PC-9 (cell line): ENCODE measurements at regions of chr3 and their contacts with region 1.

Region 1: DNA sequence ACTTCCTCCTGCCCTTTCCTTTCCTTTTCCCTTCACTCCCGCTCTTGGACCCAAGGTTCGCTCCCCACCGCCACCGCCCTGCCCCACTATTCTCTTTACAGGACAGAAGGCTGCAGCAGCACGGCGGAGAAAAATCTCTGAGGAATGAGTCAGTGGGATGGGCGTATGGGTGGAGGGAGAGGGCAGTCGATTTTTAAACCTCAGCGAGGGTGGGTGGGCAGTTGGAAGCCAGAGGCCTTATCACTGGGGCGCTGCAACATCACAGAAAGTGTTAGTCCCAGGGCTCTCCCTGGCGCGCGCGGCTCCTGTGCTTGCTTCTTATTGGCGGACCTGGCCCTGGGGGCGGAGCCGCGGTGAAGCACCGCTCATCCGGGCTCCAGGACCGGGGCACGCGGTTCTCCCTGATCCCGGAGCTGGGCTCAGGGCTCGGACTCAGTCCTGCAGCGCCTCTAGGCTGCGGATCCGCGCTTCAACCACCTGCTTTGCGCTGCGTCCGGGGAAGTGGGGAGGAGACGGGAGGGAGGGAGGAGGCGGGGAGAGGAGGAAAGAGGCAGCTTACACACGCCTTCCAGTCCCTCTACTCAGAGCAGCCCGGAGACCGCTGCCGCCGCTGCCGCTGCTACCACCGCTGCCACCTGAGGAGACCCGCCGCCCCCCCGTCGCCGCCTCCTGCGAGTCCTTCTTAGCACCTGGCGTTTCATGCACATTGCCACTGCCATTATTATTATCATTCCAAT is at the start of gene ALCAM:
- DNase-seq: peak; percentile 93 to 99
- H3K4me3 ChIP-seq: peak within 1 kb of the TSS; percentile 78
- H3K27ac ChIP-seq: peak within 1 kb of the TSS; percentile 86
- H3K4me1 ChIP-seq: peaks cover 29% of the 10 kb centered on the region
- H3K27me3 ChIP-seq: no peaks in the 10 kb centered on the region
- CTCF ChIP-seq: peak; percentile 70
- total RNA-seq, gene ALCAM: 110 and 132 TPM in 2 replicates

Region 2: DNA sequence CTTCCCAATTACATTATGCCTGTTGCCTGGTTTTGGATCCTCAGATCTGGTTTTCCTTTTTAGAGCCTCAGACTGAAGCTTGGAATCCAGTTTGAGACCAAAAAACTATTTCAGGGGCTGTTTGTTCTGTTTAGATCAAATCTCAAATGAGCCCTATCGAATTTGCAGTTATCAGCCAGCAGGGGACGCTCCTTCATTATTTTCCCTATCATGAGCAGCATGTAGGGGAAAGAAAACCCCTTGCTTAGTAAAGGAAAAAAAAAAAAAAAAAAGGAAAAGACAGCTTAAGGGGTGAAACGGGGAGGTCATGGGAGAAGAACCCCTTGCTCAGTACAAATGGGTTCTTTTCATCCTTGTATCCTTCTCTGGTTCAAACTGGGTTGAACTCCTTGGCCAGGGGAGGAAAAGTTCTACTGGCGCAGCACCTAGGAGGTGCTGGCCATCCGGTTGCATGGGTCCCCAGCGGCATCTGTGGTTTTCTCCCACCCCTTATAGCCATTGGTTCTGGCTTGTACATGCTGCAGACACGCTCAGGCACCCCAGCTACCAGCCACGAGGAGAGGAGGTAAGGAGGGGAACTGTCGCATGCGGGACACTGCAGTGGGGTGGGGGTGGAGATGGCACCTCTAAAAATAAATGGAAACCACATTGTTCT is 1374.9 kb before region 1 on chr3:
- CTCF ChIA-PET with region 1: no interaction called
- POLR2A ChIA-PET with region 1: no interaction called
- intact Hi-C with region 1: loop called (anchors 10 kb)
- DNase-seq: no peak
- H3K4me3 ChIP-seq: no peak overlapping the region
- H3K27ac ChIP-seq: no peak overlapping the region
- H3K4me1 ChIP-seq: no peaks in the 10 kb centered on the region
- H3K27me3 ChIP-seq: no peaks in the 10 kb centered on the region
- CTCF ChIP-seq: peak; percentile 75

Region 3: GRCh38 chr3:104564045-104564643 is 802.4 kb before region 1 on chr3:
- CTCF ChIA-PET with region 1: no interaction called
- POLR2A ChIA-PET with region 1: no interaction called
- intact Hi-C with region 1: loop called (anchors 1 kb)
- DNase-seq: peak; percentile 41 to 66
- H3K4me3 ChIP-seq: no peak overlapping the region
- H3K27ac ChIP-seq: no peak overlapping the region
- H3K4me1 ChIP-seq: no peaks in the 10 kb centered on the region
- H3K27me3 ChIP-seq: no peaks in the 10 kb centered on the region
- CTCF ChIP-seq: peak; percentile 96

Region 4: GRCh38 chr3:104763007-104763406 is 603.5 kb before region 1 on chr3:
- CTCF ChIA-PET with region 1: no interaction called
- POLR2A ChIA-PET with region 1: no interaction called
- intact Hi-C with region 1: loop called (anchors 10 kb)
- DNase-seq: peak in 1 of 2 experiments; percentile 10
- H3K4me3 ChIP-seq: no peak overlapping the region
- H3K27ac ChIP-seq: no peak overlapping the region
- H3K4me1 ChIP-seq: no peaks in the 10 kb centered on the region
- H3K27me3 ChIP-seq: no peaks in the 10 kb centered on the region
- CTCF ChIP-seq: no peak

Region 5: GRCh38 chr3:105158286-105158685 is 208.2 kb before region 1 on chr3:
- CTCF ChIA-PET with region 1: no interaction called
- POLR2A ChIA-PET with region 1: no interaction called
- intact Hi-C with region 1: loop called (anchors 10 kb)
- DNase-seq: no peak
- H3K4me3 ChIP-seq: no peak overlapping the region
- H3K27ac ChIP-seq: no peak overlapping the region
- H3K4me1 ChIP-seq: no peaks in the 10 kb centered on the region; the same call in 1 of the 2 replicates
- H3K27me3 ChIP-seq: no peaks in the 10 kb centered on the region
- CTCF ChIP-seq: no peak

Region 6: DNA sequence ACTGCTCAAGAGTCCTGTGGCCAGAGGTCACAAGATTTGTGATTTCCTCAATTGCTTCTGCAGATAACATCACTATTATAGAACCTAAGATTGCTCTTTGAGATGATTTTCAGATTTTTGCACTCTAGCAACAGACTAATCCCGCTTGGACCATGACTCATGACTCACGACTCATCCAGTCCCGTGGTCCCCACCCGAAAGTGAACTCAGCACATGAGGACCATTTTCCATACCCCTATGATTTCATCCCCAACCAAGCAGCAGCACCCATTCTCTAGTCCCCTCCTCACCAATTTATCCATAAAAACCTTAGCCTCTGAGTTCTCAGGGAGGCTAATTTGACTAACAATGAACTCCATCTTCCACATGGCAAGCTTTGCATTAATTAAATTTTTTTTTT is 106.1 kb before region 1 on chr3:
- CTCF ChIA-PET with region 1: no interaction called
- POLR2A ChIA-PET with region 1: no interaction called
- intact Hi-C with region 1: no loop called
- DNase-seq: no peak
- H3K4me3 ChIP-seq: no peak overlapping the region
- H3K27ac ChIP-seq: no peak overlapping the region
- H3K4me1 ChIP-seq: no peaks in the 10 kb centered on the region
- H3K27me3 ChIP-seq: no peaks in the 10 kb centered on the region
- CTCF ChIP-seq: no peak

Region 7: GRCh38 chr3:105459566-105460290 is 93.2 kb after region 1 on chr3:
- CTCF ChIA-PET with region 1: no interaction called
- POLR2A ChIA-PET with region 1: no interaction called
- intact Hi-C with region 1: no loop called
- DNase-seq: no peak
- H3K4me3 ChIP-seq: no peak overlapping the region
- H3K27ac ChIP-seq: no peak overlapping the region
- H3K4me1 ChIP-seq: no peaks in the 10 kb centered on the region
- H3K27me3 ChIP-seq: no peaks in the 10 kb centered on the region
- CTCF ChIP-seq: no peak

Region 8: GRCh38 chr3:105518806-105519418 is 152.4 kb after region 1 on chr3:
- CTCF ChIA-PET with region 1: interaction called, 16 read pairs
- POLR2A ChIA-PET with region 1: interaction called, 3 read pairs
- intact Hi-C with region 1: loop called (anchors 1 kb)
- DNase-seq: peak; percentile 22 to 57
- H3K4me3 ChIP-seq: no peak overlapping the region
- H3K27ac ChIP-seq: no peak overlapping the region
- H3K4me1 ChIP-seq: peaks cover 8% of the 10 kb centered on the region
- H3K27me3 ChIP-seq: no peaks in the 10 kb centered on the region
- CTCF ChIP-seq: peak; percentile 95

Region 9: DNA sequence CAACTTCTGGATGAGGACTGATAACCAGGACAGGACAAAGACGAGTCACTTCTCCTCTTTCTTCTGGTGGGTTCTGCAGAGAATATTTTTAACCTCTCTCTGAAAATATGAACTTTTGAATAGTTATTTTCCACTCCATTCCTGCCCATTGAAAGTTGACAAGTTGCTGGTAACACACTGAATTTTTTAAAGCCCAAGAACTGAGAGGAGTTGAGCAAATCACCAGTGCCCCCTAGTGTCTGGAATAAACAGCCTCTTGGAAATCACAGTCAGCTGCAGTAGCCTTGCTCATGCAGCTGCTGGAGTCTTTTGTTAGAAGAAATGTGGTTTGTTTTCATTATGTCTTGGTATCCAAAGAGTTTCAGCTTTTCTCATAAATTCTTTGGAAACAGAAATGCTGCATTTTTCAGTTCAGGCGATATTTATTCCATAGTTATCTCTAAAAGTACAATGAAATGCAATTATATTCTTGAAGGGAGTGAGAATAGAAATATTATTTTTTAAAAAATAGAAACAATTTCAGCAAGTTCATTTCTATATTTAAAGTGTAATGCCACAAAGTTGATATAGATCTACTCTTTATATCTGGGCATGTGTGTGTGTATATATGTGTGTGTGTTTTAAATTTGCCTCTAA is 1243.3 kb after region 1 on chr3:
- CTCF ChIA-PET with region 1: no interaction called
- POLR2A ChIA-PET with region 1: no interaction called
- intact Hi-C with region 1: loop called (anchors 5 kb)
- DNase-seq: peak; percentile 64 to 73
- H3K4me3 ChIP-seq: no peak overlapping the region
- H3K27ac ChIP-seq: no peak overlapping the region
- H3K4me1 ChIP-seq: peaks cover 11% of the 10 kb centered on the region
- H3K27me3 ChIP-seq: no peaks in the 10 kb centered on the region
- CTCF ChIP-seq: peak; percentile 98